Sciatic nerve (tissue), 2 donors: ENCODE measurements at regions of chr3 and their contacts with region 1.

Region 1: DNA sequence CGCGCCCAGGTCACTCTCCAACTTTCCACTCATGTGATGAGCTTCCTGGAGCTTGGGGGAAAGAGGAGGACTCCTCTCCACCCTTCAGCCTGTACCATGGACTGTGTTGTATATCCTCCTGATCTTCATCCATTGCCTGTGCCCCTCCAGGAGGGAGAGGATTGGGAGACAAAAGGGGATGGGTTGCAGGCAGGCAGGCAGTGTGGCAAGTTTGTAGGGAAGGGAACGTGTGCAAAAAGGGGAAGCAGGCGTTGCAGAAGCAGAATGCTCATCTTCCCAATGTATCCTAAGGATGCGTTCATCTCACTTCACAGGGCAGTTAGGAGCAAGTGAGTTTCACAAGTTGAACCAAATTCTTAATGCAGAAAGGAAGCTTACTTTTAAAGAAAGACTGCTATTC is 28.1 kb upstream of the GHSR start:
- DNase-seq: no peak
- ATAC-seq: no peak

Region 2: GRCh38 chr3:171646357-171647133 is 829.8 kb before region 1 on chr3:
- intact Hi-C with region 1: loop called (anchors 5 kb)
- DNase-seq: no peak
- ATAC-seq: peak; percentile 71

Region 3: GRCh38 chr3:172461530-172462138 is 14.7 kb before region 1 on chr3:
- intact Hi-C with region 1: no loop called
- DNase-seq: no peak
- ATAC-seq: no peak